ENCODE measurements at regions of chr1 and their contacts with region 1.

Region 1: DNA sequence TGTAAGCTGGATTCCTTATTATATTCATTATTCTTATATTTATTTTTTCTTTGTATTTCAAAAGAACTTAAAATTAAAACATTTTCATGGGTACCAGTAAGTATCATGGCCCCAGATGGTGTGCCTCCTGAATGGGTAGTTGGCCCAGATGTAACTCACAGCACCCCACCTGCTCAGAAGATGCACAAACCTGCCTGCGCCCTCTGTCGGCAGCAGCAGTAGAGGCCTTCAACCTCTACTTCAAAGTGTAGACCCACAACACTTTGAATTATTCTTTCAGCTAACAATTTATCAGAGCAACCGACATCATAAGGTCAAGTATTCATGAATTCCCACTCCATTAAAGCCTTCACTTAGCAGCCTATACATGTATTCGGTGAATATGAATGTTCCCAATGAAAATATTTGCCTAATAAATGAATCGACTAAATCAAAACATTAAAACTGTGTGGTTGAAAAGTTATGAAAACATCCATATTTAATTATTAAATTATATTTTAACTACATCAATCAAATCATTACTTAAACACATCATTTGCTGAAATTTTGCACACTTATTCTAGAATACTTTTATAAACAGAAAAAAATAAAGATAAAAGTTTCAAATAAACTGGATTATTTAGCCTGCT is 25.4 kb downstream of the PIGM start:
- DNase-seq: peak; percentile 58 to 74 (median 59)
- H3K4me3 ChIP-seq: no peak overlapping the region
- H3K4me3 Mint-ChIP-seq: no peak overlapping the region
- H3K27ac ChIP-seq: no peak overlapping the region
- H3K27ac Mint-ChIP-seq: no peak overlapping the region
- H3K4me1 ChIP-seq: peaks cover 11 to 13% of the 10 kb centered on the region in 2 donors
- H3K4me1 Mint-ChIP-seq: peaks cover 9% of the 10 kb centered on the region
- H3K27me3 ChIP-seq: no peaks in the 10 kb centered on the region
- H3K27me3 Mint-ChIP-seq: peaks cover 0 to 7% (median 0%) of the 10 kb centered on the region in 3 donors
- CTCF ChIP-seq: peak; percentile 86

Region 2: DNA sequence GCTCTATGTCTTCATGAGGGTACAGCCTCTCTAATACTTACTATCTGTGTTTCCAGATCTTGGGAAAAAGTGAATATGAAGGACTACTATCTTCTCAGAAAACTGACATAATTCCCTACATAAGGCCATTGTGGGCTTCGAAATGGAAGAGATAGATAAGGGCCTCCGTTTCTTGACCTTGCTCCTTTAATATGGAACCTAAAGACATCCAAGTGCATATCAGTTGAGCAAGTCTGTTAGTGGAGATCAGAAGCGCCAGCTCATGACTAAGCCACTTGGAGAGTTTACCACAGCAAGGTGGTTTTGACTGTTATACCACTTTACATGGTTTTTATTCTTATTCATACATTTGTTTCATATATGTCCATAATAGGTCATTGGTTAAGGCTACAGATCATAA is 739.6 kb before region 1 on chr1:
- intact Hi-C with region 1: no loop called
- DNase-seq: no peak
- H3K4me3 ChIP-seq: no peak overlapping the region
- H3K4me3 Mint-ChIP-seq: no peak overlapping the region
- H3K27ac ChIP-seq: no peak overlapping the region
- H3K27ac Mint-ChIP-seq: no peak overlapping the region
- H3K4me1 ChIP-seq: no peaks in the 10 kb centered on the region
- H3K4me1 Mint-ChIP-seq: no peaks in the 10 kb centered on the region
- H3K27me3 ChIP-seq: no peaks in the 10 kb centered on the region
- H3K27me3 Mint-ChIP-seq: peaks cover 0 to 2% (median 0%) of the 10 kb centered on the region in 3 donors
- CTCF ChIP-seq: no peak

Region 3: GRCh38 chr1:159780583-159781582 is 225.5 kb before region 1 on chr1 and contains the start of gene DUSP23:
- intact Hi-C with region 1: loop called in 1 of 2 experiments (anchors 10 kb)
- DNase-seq: peak; percentile 97
- H3K4me3 ChIP-seq: peak within 1 kb of the TSS; percentile 64 to 91 (median 72)
- H3K4me3 Mint-ChIP-seq: peak within 1 kb of the TSS; percentile 81 to 90
- H3K27ac ChIP-seq: peak within 1 kb of the TSS in 1 of 2 donors; percentile 68
- H3K27ac Mint-ChIP-seq: peak within 1 kb of the TSS in 6 of 7 donors; percentile 34 to 86 (median 68)
- H3K4me1 ChIP-seq: peaks cover 13 to 17% of the 10 kb centered on the region in 2 donors
- H3K4me1 Mint-ChIP-seq: peaks cover 14% of the 10 kb centered on the region
- H3K27me3 ChIP-seq: no peaks in the 10 kb centered on the region
- H3K27me3 Mint-ChIP-seq: peaks cover 0 to 2% (median 1%) of the 10 kb centered on the region in 3 donors
- CTCF ChIP-seq: peak; percentile 92
- polyA plus RNA-seq, gene DUSP23: 37.3 to 136 (median 97.8) TPM

Region 4: GRCh38 chr1:159798893-159799292 is 207.5 kb before region 1 on chr1:
- intact Hi-C with region 1: loop called in 1 of 2 experiments (anchors 5 kb)
- DNase-seq: peak; percentile 55 to 74 (median 73)
- H3K4me3 ChIP-seq: no peak overlapping the region
- H3K4me3 Mint-ChIP-seq: no peak overlapping the region
- H3K27ac ChIP-seq: no peak overlapping the region
- H3K27ac Mint-ChIP-seq: no peak overlapping the region
- H3K4me1 ChIP-seq: peaks cover 26 to 34% of the 10 kb centered on the region in 2 donors
- H3K4me1 Mint-ChIP-seq: peaks cover 38% of the 10 kb centered on the region
- H3K27me3 ChIP-seq: peaks cover 0 to 6% of the 10 kb centered on the region in 2 donors
- H3K27me3 Mint-ChIP-seq: peaks cover 7 to 10% (median 10%) of the 10 kb centered on the region in 3 donors
- CTCF ChIP-seq: peak; percentile 84

Region 5: GRCh38 chr1:159900086-159900680 is 106.2 kb before region 1 on chr1 and contains the start of gene CFAP45:
- intact Hi-C with region 1: no loop called
- DNase-seq: peak; percentile 84 to 91 (median 84)
- H3K4me3 ChIP-seq: no peak within 1 kb of the TSS
- H3K4me3 Mint-ChIP-seq: peak within 1 kb of the TSS; percentile 51 to 74
- H3K27ac ChIP-seq: no peak within 1 kb of the TSS
- H3K27ac Mint-ChIP-seq: peak within 1 kb of the TSS; percentile 67 to 98 (median 95)
- H3K4me1 ChIP-seq: peaks cover 47 to 60% of the 10 kb centered on the region in 2 donors
- H3K4me1 Mint-ChIP-seq: peaks cover 53% of the 10 kb centered on the region
- H3K27me3 ChIP-seq: no peaks in the 10 kb centered on the region
- H3K27me3 Mint-ChIP-seq: peaks cover 2 to 6% (median 4%) of the 10 kb centered on the region in 3 donors
- CTCF ChIP-seq: no peak
- polyA plus RNA-seq, gene CFAP45: 0.12 to 1.0 TPM in 2 of 3 donors, not detected in the other

Region 6: GRCh38 chr1:159936273-159936904 is 70.0 kb before region 1 on chr1:
- intact Hi-C with region 1: loop called (anchors 2 kb)
- DNase-seq: peak; percentile 65 to 72 (median 69)
- H3K4me3 ChIP-seq: peak overlapping the region in 1 of 3 experiments; percentile 63
- H3K4me3 Mint-ChIP-seq: no peak overlapping the region
- H3K27ac ChIP-seq: peak overlapping the region in 1 of 2 donors; percentile 43
- H3K27ac Mint-ChIP-seq: peak overlapping the region in 6 of 7 donors; percentile 17 to 75 (median 48)
- H3K4me1 ChIP-seq: peaks cover 40 to 50% of the 10 kb centered on the region in 2 donors
- H3K4me1 Mint-ChIP-seq: peaks cover 57% of the 10 kb centered on the region
- H3K27me3 ChIP-seq: no peaks in the 10 kb centered on the region
- H3K27me3 Mint-ChIP-seq: peaks cover 0 to 2% (median 2%) of the 10 kb centered on the region in 3 donors
- CTCF ChIP-seq: peak; percentile 99

Region 7: DNA sequence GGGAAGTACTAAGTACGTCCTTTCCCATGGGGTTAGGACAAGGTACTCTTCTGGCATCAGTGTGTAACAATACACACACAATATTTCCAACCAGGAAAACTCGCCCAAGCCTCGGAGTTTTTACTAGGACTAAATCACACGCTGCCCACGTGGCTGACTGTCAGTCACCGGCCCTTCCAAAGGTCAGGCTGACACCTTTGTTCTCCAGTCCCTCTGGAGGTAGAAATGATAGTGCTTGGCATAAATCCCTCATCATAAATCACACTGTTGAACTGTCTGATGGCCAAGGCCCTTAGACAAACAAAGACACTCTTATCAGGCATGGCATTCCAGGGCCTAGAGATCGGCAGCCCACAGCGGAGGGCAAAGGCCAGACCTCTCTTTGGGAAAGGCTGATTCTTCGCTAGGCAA is 35.5 kb before region 1 on chr1:
- intact Hi-C with region 1: no loop called
- DNase-seq: no peak
- H3K4me3 ChIP-seq: no peak overlapping the region
- H3K4me3 Mint-ChIP-seq: no peak overlapping the region
- H3K27ac ChIP-seq: no peak overlapping the region
- H3K27ac Mint-ChIP-seq: no peak overlapping the region
- H3K4me1 ChIP-seq: peaks cover 9 to 11% of the 10 kb centered on the region in 2 donors
- H3K4me1 Mint-ChIP-seq: peaks cover 7% of the 10 kb centered on the region
- H3K27me3 ChIP-seq: peaks cover 0 to 11% of the 10 kb centered on the region in 2 donors
- H3K27me3 Mint-ChIP-seq: peaks cover 0 to 7% (median 0%) of the 10 kb centered on the region in 3 donors
- CTCF ChIP-seq: no peak

Region 8: GRCh38 chr1:160058087-160058486 is 51.7 kb after region 1 on chr1:
- intact Hi-C with region 1: no loop called
- DNase-seq: no peak
- H3K4me3 ChIP-seq: no peak overlapping the region
- H3K4me3 Mint-ChIP-seq: no peak overlapping the region
- H3K27ac ChIP-seq: no peak overlapping the region
- H3K27ac Mint-ChIP-seq: no peak overlapping the region
- H3K4me1 ChIP-seq: peaks cover 7 to 9% of the 10 kb centered on the region in 2 donors
- H3K4me1 Mint-ChIP-seq: no peaks in the 10 kb centered on the region
- H3K27me3 ChIP-seq: peaks cover 0 to 5% of the 10 kb centered on the region in 2 donors
- H3K27me3 Mint-ChIP-seq: peaks cover 14 to 19% (median 17%) of the 10 kb centered on the region in 3 donors
- CTCF ChIP-seq: no peak